Transverse colon (tissue), 4 donors: ENCODE measurements at regions of chr18 and their contacts with region 1.

Region 1: DNA sequence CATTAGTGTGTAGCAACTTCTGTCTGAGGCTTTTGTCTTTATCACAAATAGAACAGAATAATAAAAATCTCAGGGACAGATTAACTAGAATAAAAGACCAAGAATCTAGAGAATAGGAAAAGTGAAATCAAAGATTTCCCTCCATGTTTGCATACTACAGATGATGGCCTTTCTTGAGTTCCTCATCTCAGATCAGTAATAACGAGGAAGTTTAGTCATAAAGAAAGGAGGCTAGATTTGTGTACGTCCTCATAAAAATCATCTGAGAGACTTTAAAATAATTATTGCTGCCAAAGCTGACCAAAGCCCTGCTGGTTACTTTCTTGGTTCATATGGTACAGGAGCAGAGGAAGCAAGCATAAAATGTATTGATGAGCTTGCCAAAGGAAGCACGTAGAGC is 117.3 kb downstream of the MIB1 start:
- DNase-seq: no peak
- H3K4me3 ChIP-seq: no peak overlapping the region
- H3K27ac ChIP-seq: no peak overlapping the region
- H3K4me1 ChIP-seq: peaks cover 0 to 12% (median 0%) of the 10 kb centered on the region in 4 donors
- H3K27me3 ChIP-seq: no peaks in the 10 kb centered on the region
- CTCF ChIP-seq: no peak
- EP300 ChIP-seq: no peak
- POLR2A ChIP-seq: no peak

Region 2: GRCh38 chr18:21933931-21934765 is 76.3 kb after region 1 on chr18:
- in situ Hi-C with region 1: no loop called
- intact Hi-C with region 1: loop called (anchors 2 kb)
- DNase-seq: no peak
- H3K4me3 ChIP-seq: no peak overlapping the region
- H3K27ac ChIP-seq: no peak overlapping the region
- H3K4me1 ChIP-seq: no peaks in the 10 kb centered on the region
- H3K27me3 ChIP-seq: no peaks in the 10 kb centered on the region
- CTCF ChIP-seq: no peak
- EP300 ChIP-seq: no peak
- POLR2A ChIP-seq: no peak